IMR-90 (cell line): ENCODE measurements at regions of chr2 and their contacts with region 1.

Region 1: GRCh38 chr2:17851731-17852585 is 26.5 kb upstream of the KCNS3 start:
- DNase-seq: peak; percentile 69
- ATAC-seq: peak; percentile 98
- H3K4me3 ChIP-seq: no peak overlapping the region
- H3K27ac ChIP-seq: no peak overlapping the region
- H3K4me1 ChIP-seq: no peaks in the 10 kb centered on the region
- H3K27me3 ChIP-seq: peaks cover 5% of the 10 kb centered on the region
- CTCF ChIP-seq: peak; percentile 98
- POLR2A ChIP-seq: peak; percentile 71
- RAD21 ChIP-seq: peak; percentile 98

Region 2: DNA sequence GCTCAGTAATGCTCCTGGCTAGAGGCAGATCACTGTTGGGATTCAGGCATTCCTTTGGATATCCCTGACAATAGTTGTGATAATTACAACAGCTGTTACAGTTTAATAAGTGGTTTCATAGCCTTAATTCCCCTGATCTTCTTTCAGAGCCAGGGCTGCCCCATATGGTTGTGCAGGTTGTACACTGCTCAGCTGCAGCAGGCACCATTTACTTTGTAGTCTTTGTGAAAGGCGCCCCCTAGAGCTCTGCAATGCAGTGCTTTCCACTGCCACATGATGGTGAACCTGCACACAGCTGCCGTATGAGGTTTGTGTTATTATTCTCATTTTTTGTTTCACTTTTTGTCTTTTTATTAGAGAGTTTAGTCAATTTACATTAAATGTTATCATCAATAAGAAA is 265.6 kb after region 1 on chr2:
- CTCF ChIA-PET with region 1: interaction called, 4 read pairs
- POLR2A ChIA-PET with region 1: no interaction called
- dilution Hi-C with region 1: no loop called
- in situ Hi-C with region 1: no loop called
- intact Hi-C with region 1: loop called (anchors 1 kb)
- DNase-seq: peak; percentile 41
- ATAC-seq: peak; percentile 59
- H3K4me3 ChIP-seq: no peak overlapping the region
- H3K27ac ChIP-seq: no peak overlapping the region
- H3K4me1 ChIP-seq: no peaks in the 10 kb centered on the region
- H3K27me3 ChIP-seq: no peaks in the 10 kb centered on the region
- CTCF ChIP-seq: peak; percentile 88
- POLR2A ChIP-seq: no peak
- RAD21 ChIP-seq: peak; percentile 59

Region 3: DNA sequence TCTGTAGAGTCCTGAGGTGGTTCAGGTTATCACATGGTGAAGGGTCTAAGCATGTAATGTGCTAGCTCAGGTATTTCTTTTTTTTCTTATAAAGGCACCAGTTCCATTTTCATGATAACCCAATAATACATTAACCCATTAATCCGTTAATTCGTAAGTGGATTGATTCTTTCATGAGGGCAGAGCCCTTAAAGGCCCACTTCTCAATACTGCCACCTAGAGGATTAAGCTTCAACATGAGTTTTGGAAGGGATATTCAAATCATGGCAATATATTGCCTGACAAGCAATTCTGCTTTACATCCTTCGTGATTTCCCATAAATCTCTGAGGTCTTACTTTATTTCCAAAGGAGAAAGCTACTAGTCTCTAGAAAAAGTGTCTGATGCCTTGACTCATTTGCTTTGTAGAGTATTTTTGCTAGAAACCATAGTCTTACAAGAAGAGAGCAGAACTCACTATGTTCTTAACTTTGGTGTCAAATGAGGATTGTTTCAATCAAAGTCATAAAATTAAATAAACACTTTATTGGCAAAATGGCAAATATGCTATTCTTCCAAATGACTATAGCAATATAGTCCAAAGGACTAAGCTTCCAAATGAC is 297.8 kb after region 1 on chr2:
- CTCF ChIA-PET with region 1: interaction called, 3 read pairs
- POLR2A ChIA-PET with region 1: no interaction called
- dilution Hi-C with region 1: no loop called
- in situ Hi-C with region 1: loop called (anchors 25 kb)
- intact Hi-C with region 1: loop called (anchors 1 kb)
- DNase-seq: peak; percentile 63
- ATAC-seq: peak; percentile 75
- H3K4me3 ChIP-seq: no peak overlapping the region
- H3K27ac ChIP-seq: no peak overlapping the region
- H3K4me1 ChIP-seq: no peaks in the 10 kb centered on the region
- H3K27me3 ChIP-seq: peaks cover 6% of the 10 kb centered on the region
- CTCF ChIP-seq: peak; percentile 77
- POLR2A ChIP-seq: no peak
- RAD21 ChIP-seq: peak; percentile 72

Region 4: GRCh38 chr2:18178736-18179349 is 326.9 kb after region 1 on chr2:
- CTCF ChIA-PET with region 1: no interaction called
- POLR2A ChIA-PET with region 1: no interaction called
- dilution Hi-C with region 1: no loop called
- in situ Hi-C with region 1: loop called (anchors 25 kb)
- intact Hi-C with region 1: loop called (anchors 1 kb)
- DNase-seq: peak; percentile 38
- ATAC-seq: peak; percentile 72; the same call in 1 of the 2 replicates
- H3K4me3 ChIP-seq: no peak overlapping the region
- H3K27ac ChIP-seq: no peak overlapping the region
- H3K4me1 ChIP-seq: no peaks in the 10 kb centered on the region
- H3K27me3 ChIP-seq: peaks cover 5% of the 10 kb centered on the region
- CTCF ChIP-seq: peak; percentile 66
- POLR2A ChIP-seq: no peak
- RAD21 ChIP-seq: peak; percentile 64